ENCODE measurements at regions of chr9 and their contacts with region 1.

Region 1: GRCh38 chr9:121213136-121213806 is 11.6 kb upstream of the RAB14 start:
- DNase-seq: peak; percentile 74 to 93
- H3K4me3 ChIP-seq: no peak overlapping the region
- H3K27ac ChIP-seq: no peak overlapping the region
- H3K4me1 ChIP-seq: peaks cover 0 to 6% (median 1%) of the 10 kb centered on the region in 4 experiments; a peak in 3 of 7 replicates
- H3K27me3 ChIP-seq: no peaks in the 10 kb centered on the region
- CTCF ChIP-seq: peak; percentile 96 to 98 (median 98)
- EP300 ChIP-seq: no peak
- POLR2A ChIP-seq: no peak
- RAD21 ChIP-seq: peak; percentile 100

Region 2: DNA sequence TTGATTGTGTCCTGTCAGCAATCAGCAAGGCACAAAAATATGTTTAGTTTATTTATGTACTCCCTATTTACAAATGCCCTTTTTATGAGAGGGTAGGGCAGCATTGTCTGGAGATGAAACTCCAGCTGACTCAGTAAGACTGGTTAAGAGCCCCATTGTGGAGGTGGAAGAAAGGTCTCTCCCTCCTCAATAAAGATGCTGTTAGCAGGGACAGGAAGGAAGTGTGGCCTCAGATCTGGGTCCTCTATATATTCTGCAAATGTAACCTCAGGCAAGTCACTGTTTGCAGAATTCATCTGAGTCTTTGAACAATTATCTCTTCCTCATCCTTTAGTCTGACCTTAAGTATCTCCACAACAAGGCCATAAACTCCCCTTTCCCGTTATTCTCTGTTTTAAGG is 238.3 kb before region 1 on chr9:
- CTCF ChIA-PET with region 1: no interaction called
- POLR2A ChIA-PET with region 1: no interaction called
- DNase-seq: no peak
- H3K4me3 ChIP-seq: no peak overlapping the region
- H3K27ac ChIP-seq: no peak overlapping the region
- H3K4me1 ChIP-seq: peaks cover 0 to 4% (median 0%) of the 10 kb centered on the region in 4 experiments; a peak in 1 of 7 replicates
- H3K27me3 ChIP-seq: no peaks in the 10 kb centered on the region
- CTCF ChIP-seq: no peak
- EP300 ChIP-seq: no peak
- POLR2A ChIP-seq: no peak
- RAD21 ChIP-seq: no peak

Region 3: GRCh38 chr9:121233906-121234901 is 20.9 kb after region 1 on chr9:
- CTCF ChIA-PET with region 1: interaction called, 10 read pairs
- POLR2A ChIA-PET with region 1: no interaction called
- DNase-seq: no peak
- H3K4me3 ChIP-seq: no peak overlapping the region
- H3K27ac ChIP-seq: no peak overlapping the region
- H3K4me1 ChIP-seq: peaks cover 0 to 3% (median 0%) of the 10 kb centered on the region in 4 experiments; a peak in 1 of 7 replicates
- H3K27me3 ChIP-seq: peaks cover 0 to 2% (median 0%) of the 10 kb centered on the region in 4 experiments; a peak in 3 of 7 replicates
- CTCF ChIP-seq: no peak
- EP300 ChIP-seq: no peak
- POLR2A ChIP-seq: no peak
- RAD21 ChIP-seq: no peak

Region 4: DNA sequence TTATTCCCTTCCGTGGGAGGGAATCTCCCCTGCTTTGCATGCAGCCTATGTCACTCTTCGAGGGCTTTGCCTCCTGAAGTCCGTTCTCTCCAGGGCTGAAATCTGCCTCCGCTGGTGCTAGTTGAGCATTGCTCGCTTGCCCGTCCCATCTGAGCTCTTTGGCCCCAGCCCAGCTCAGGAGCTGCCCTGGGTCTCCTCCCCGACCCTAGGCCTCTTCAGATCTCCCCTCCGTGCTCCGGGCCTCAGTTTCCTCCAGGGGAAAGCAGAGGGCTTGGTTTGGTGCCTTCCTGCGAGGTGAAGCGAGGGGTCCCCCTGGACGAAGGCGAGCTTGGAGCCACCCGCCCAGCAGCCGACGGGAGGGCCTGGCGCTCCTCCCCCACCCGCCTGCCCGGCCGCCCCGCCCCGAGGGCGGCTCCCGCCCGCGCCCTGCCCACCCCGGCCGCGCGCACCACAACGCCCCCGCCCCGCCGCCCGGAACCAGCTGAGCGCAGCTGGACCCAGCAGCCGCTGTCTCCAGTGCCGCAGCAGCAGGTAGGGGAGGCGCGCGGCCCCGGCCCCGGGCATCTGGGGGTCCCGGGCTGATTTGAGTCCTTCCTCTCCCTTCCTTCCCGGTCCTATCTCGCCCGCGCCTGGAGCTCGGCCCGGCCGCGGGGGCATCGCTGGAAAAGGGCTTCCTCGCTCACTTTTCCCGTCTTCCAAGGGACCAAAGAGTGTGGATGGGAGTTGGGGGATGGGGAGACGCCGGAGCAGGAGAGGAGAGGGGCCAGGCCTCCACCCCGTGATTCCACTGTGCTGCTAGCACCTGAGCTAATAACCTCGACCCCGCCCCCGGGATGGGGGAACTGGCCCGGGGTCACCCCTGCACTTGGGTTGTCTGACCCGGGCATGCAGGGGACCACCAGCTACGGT is 54.7 kb after region 1 on chr9 and contains the start of gene GSN:
- CTCF ChIA-PET with region 1: interaction called, 39 read pairs
- POLR2A ChIA-PET with region 1: interaction called, 5 read pairs
- DNase-seq: peak in 1 of 2 experiments; percentile 86
- H3K4me3 ChIP-seq: peak within 1 kb of the TSS; percentile 63 to 94 (median 72)
- H3K27ac ChIP-seq: no peak within 1 kb of the TSS
- H3K4me1 ChIP-seq: peaks cover 4 to 31% (median 12%) of the 10 kb centered on the region in 4 experiments
- H3K27me3 ChIP-seq: peaks cover 0 to 30% (median 22%) of the 10 kb centered on the region in 4 experiments; a peak in 6 of 7 replicates
- CTCF ChIP-seq: peak in 2 of 3 experiments; percentile 0 to 32; a peak in 2 of 4 replicates
- EP300 ChIP-seq: no peak
- POLR2A ChIP-seq: 0 out of 3 replicates have a peak, but pooled peaks of 1 of the 2 experiments have one; percentile 8
- RAD21 ChIP-seq: peak in 1 of 2 experiments; percentile 7; a peak in 2 of 4 replicates
- total RNA-seq, gene GSN: 49.7 and 52.3 TPM in 2 replicates

Region 5: DNA sequence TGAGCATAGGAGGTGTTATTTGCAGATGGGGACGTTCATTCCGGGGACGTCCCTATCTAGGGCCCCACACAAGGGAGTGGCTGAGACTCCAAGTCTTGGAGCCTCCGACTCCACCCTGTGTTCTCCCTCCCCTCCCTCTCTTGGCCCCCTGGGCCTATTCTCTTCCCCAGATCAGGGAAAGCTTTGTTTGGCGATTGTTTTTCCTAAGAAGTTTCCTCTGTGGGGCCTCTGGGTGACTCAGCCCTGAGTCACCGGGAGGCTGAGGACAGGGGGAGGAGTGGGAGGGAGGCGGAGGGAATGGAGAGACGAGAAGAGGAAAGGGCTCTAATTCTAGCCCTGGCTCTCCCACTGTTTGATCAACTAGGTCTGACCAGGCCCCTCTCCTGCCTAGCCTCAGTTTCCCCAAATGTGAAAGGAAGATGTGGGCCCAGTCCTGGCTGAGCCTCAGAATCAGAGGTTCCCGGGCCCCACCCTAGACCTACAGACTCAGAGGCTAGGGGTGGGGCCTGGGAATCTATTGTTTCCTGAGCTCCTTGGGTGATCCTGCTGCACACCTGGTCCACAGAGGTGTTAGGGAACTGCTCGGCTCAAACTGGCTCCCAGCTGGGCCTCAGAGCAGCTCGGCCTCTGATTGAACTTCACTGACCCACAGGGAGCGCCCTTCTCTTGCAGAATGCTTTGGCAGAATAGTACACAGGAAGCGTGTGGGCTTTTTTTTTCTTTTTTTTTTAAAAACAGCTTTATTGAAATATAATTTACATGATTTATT is 73.9 kb after region 1 on chr9:
- CTCF ChIA-PET with region 1: interaction called, 42 read pairs
- POLR2A ChIA-PET with region 1: no interaction called
- DNase-seq: peak; percentile 77 to 88
- H3K4me3 ChIP-seq: peak overlapping the region in 1 of 4 experiments; percentile 45; a peak in 4 of 8 replicates
- H3K27ac ChIP-seq: no peak overlapping the region
- H3K4me1 ChIP-seq: peaks cover 24 to 36% (median 28%) of the 10 kb centered on the region in 4 experiments
- H3K27me3 ChIP-seq: peaks cover 9 to 54% (median 47%) of the 10 kb centered on the region in 4 experiments
- CTCF ChIP-seq: peak; percentile 13 to 42 (median 28)
- EP300 ChIP-seq: peak in 1 of 2 experiments; percentile 66; a peak in 1 of 3 replicates
- POLR2A ChIP-seq: no peak
- RAD21 ChIP-seq: peak; percentile 30 to 44; a peak in 3 of 4 replicates

Region 6: GRCh38 chr9:121313458-121314152 is 100.3 kb after region 1 on chr9:
- CTCF ChIA-PET with region 1: interaction called, 37 read pairs
- POLR2A ChIA-PET with region 1: interaction called, 3 read pairs
- DNase-seq: no peak
- H3K4me3 ChIP-seq: no peak overlapping the region
- H3K27ac ChIP-seq: no peak overlapping the region
- H3K4me1 ChIP-seq: no peaks in the 10 kb centered on the region
- H3K27me3 ChIP-seq: no peaks in the 10 kb centered on the region
- CTCF ChIP-seq: no peak
- EP300 ChIP-seq: no peak
- POLR2A ChIP-seq: no peak
- RAD21 ChIP-seq: no peak

Region 7: GRCh38 chr9:121439711-121440664 is 226.7 kb after region 1 on chr9:
- CTCF ChIA-PET with region 1: interaction called, 18 read pairs
- POLR2A ChIA-PET with region 1: no interaction called
- DNase-seq: no peak
- H3K4me3 ChIP-seq: no peak overlapping the region
- H3K27ac ChIP-seq: no peak overlapping the region
- H3K4me1 ChIP-seq: no peaks in the 10 kb centered on the region
- H3K27me3 ChIP-seq: no peaks in the 10 kb centered on the region; a peak in 1 of 7 replicates
- CTCF ChIP-seq: peak in 2 of 3 experiments; percentile 6 to 20; a peak in 2 of 4 replicates
- EP300 ChIP-seq: no peak
- POLR2A ChIP-seq: no peak
- RAD21 ChIP-seq: peak in 1 of 2 experiments; percentile 40; a peak in 2 of 4 replicates